ENCODE measurements at regions of chr9 and their contacts with region 1.

Region 1: GRCh38 chr9:20331095-20331685 is 291.1 kb downstream of the MLLT3 start:
- DNase-seq: no peak
- H3K4me3 Mint-ChIP-seq: peak overlapping the region; percentile 21
- H3K27ac Mint-ChIP-seq: peak overlapping the region; percentile 40
- H3K4me1 Mint-ChIP-seq: peaks cover 23% of the 10 kb centered on the region
- H3K27me3 Mint-ChIP-seq: no peaks in the 10 kb centered on the region

Region 2: GRCh38 chr9:20319641-20320337 is 11.4 kb before region 1 on chr9:
- intact Hi-C with region 1: loop called (anchors 1 kb)
- DNase-seq: peak; percentile 80
- H3K4me3 Mint-ChIP-seq: peak overlapping the region; percentile 60
- H3K27ac Mint-ChIP-seq: peak overlapping the region; percentile 94
- H3K4me1 Mint-ChIP-seq: peaks cover 78% of the 10 kb centered on the region
- H3K27me3 Mint-ChIP-seq: no peaks in the 10 kb centered on the region

Measured in activated CD4-positive, alpha-beta T cell treated with anti-CD3 and anti-CD28 coated beads, Interleukin-2, amount 10 ng/mL, durations not matched to agents 24 days and 14 days (primary cell).